Heart right ventricle (tissue), 16 donors: ENCODE measurements at regions of chr17 and their contacts with region 1.

Region 1: GRCh38 chr17:52276381-52277008 is 118.0 kb upstream of the CA10 start:
- DNase-seq: no peak
- ATAC-seq: no peak
- H3K4me3 ChIP-seq: no peak overlapping the region
- H3K27ac ChIP-seq: no peak overlapping the region
- H3K4me1 ChIP-seq: no peaks in the 10 kb centered on the region
- H3K27me3 ChIP-seq: no peaks in the 10 kb centered on the region
- CTCF ChIP-seq: no peak

Region 2: DNA sequence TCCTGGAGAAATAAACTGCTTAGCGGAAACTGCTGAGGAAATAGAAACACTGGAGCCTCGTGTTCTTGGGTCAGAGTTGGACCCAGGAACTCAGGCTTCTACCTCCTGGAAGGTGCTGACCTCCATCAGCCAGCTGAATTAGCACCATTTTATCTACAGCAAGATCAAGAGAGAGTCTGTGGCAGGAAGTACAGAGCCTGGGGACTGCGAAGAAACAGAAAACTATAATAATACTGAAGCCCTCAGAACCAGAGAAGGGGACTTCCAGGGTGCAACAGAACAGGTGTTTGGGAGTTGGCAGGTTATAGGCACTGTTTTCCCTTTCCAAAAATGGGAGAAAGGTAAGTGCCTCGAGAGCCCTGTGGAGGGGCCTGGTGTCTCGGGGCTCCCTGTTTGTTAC is 497.7 kb before region 1 on chr17:
- intact Hi-C with region 1: no loop called
- DNase-seq: no peak
- ATAC-seq: no peak
- H3K4me3 ChIP-seq: no peak overlapping the region
- H3K27ac ChIP-seq: no peak overlapping the region
- H3K4me1 ChIP-seq: no peaks in the 10 kb centered on the region
- H3K27me3 ChIP-seq: peaks cover 0 to 9% (median 0%) of the 10 kb centered on the region in 7 donors
- CTCF ChIP-seq: no peak

Region 3: GRCh38 chr17:52242268-52242667 is 34.2 kb before region 1 on chr17:
- intact Hi-C with region 1: loop called in 1 of 10 experiments (anchors 1 kb)
- DNase-seq: no peak
- ATAC-seq: no peak
- H3K4me3 ChIP-seq: no peak overlapping the region
- H3K27ac ChIP-seq: no peak overlapping the region
- H3K4me1 ChIP-seq: no peaks in the 10 kb centered on the region
- H3K27me3 ChIP-seq: no peaks in the 10 kb centered on the region
- CTCF ChIP-seq: no peak

Region 4: GRCh38 chr17:52470554-52470953 is 194.1 kb after region 1 on chr17:
- intact Hi-C with region 1: no loop called
- DNase-seq: no peak
- ATAC-seq: no peak
- H3K4me3 ChIP-seq: no peak overlapping the region
- H3K27ac ChIP-seq: no peak overlapping the region
- H3K4me1 ChIP-seq: no peaks in the 10 kb centered on the region
- H3K27me3 ChIP-seq: no peaks in the 10 kb centered on the region
- CTCF ChIP-seq: no peak